ENCODE measurements at regions of chr12 and their contacts with region 1.

Region 1: DNA sequence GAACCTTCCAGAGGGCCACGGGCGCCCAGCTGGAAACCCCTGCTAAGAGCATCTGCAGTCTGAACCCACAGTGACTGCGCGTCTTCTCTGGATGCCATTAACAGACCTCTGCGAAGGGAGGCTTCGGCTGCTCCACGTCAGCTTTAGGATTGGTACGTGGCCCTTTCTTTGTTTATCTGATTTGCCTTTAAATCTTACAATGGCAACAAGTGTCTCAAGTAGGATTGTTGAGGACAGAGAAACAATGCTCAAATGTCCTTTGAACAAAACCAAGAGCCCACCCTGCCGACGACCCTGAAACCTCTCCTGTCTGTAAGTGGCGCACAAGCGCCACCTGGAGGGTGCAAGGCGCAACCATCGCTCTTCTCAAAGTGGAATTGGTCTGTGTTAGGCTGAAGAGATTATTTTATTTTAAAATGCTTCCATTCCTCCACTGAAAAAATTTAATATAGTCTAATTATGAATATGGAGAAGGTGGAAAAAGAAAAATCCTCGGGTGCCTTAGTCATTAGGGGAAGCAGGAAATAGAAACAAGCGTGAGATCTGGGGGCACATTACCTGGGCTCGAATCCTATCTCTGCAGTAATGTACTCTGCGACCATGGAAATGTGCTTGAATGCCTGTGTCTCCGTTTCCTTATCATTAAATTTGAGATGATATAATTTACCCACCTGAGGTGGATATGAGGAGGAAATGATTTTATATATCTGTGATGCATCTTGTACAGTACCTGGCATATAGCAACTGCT is 82.6 kb upstream of the PTPRB start:
- DNase-seq: peak; percentile 15 to 18
- H3K4me3 ChIP-seq: no peak overlapping the region
- H3K27ac ChIP-seq: peak overlapping the region in 1 of 3 donors; percentile 37
- H3K4me1 ChIP-seq: no peaks in the 10 kb centered on the region
- H3K27me3 ChIP-seq: no peaks in the 10 kb centered on the region
- CTCF ChIP-seq: peak; percentile 52 to 88 (median 80)
- POLR2A ChIP-seq: no peak

Region 2: GRCh38 chr12:70590051-70590450 is 129.8 kb before region 1 on chr12:
- intact Hi-C with region 1: loop called (anchors 5 kb)
- DNase-seq: peak; percentile 73 to 85
- H3K4me3 ChIP-seq: no peak overlapping the region
- H3K27ac ChIP-seq: no peak overlapping the region
- H3K4me1 ChIP-seq: no peaks in the 10 kb centered on the region
- H3K27me3 ChIP-seq: no peaks in the 10 kb centered on the region
- CTCF ChIP-seq: peak; percentile 64 to 85 (median 77)
- POLR2A ChIP-seq: no peak

Measured in thyroid gland (tissue), 4 donors.